Breast epithelium (tissue), 4 donors: ENCODE measurements at regions of chr1 and their contacts with region 1.

Region 1: GRCh38 chr1:184980726-184981125 is 6.4 kb upstream of the NIBAN1 start:
- DNase-seq: no peak
- H3K4me3 ChIP-seq: no peak overlapping the region
- H3K27ac ChIP-seq: no peak overlapping the region
- H3K4me1 ChIP-seq: no peaks in the 10 kb centered on the region
- H3K27me3 ChIP-seq: no peaks in the 10 kb centered on the region
- CTCF ChIP-seq: no peak
- POLR2A ChIP-seq: no peak

Region 2: DNA sequence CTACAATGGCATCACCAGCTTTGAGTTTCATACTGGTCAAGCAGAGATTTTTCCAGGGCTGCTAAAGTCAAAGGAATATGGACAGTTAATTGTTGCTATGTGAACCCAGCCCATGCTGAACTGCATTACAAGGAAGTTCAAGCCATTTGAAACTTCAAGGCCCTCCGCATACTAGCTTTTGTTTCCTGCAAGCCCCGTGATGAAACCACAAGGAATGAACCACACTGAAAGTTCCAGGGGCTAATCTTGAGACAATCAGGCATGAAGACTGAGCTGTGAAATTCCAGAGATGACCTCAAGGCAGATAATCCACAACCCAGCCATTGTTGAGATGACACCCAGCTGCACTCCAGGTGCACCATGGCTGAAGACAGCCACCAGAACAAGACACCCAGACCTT is 413.1 kb before region 1 on chr1:
- intact Hi-C with region 1: no loop called
- DNase-seq: no peak
- H3K4me3 ChIP-seq: no peak overlapping the region
- H3K27ac ChIP-seq: no peak overlapping the region
- H3K4me1 ChIP-seq: no peaks in the 10 kb centered on the region
- H3K27me3 ChIP-seq: no peaks in the 10 kb centered on the region
- CTCF ChIP-seq: no peak
- POLR2A ChIP-seq: no peak

Region 3: DNA sequence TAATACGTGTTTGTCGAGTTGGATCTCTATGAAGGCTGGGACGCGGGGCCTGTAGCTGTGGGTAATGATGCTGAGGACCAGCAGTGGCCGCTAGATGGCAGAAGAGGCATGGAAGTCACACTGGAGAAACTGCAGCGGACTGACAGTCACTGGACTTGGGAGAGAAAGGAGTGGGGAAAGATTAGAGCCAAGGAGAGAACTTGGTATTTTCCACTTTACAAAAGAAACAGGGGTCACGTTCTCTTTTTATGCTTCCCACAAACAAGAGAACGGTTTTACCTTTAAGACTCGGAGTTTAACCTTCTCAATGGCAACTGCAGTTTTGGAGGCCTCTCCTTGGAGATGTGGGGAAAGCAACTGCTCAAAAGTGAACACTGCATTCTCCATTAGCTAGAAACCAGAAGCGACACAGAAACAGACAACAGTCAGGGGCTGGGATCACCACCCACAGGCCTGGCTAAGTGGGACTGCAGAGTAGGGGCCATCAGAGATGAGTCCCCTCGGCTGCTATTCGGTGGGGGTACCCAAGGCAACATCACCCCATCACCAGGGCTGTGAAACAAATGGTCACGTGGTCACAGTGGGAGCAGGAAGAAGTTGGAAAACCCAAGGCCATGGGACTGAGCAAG is 174.9 kb before region 1 on chr1:
- intact Hi-C with region 1: loop called (anchors 1 kb)
- DNase-seq: peak; percentile 87 to 91
- H3K4me3 ChIP-seq: no peak overlapping the region
- H3K27ac ChIP-seq: peak overlapping the region in 1 of 2 donors; percentile 23
- H3K4me1 ChIP-seq: no peaks in the 10 kb centered on the region
- H3K27me3 ChIP-seq: no peaks in the 10 kb centered on the region
- CTCF ChIP-seq: peak; percentile 84 to 97 (median 94)
- POLR2A ChIP-seq: no peak

Region 4: GRCh38 chr1:184965944-184966860 is 14.5 kb before region 1 on chr1:
- intact Hi-C with region 1: no loop called
- DNase-seq: no peak
- H3K4me3 ChIP-seq: no peak overlapping the region
- H3K27ac ChIP-seq: no peak overlapping the region
- H3K4me1 ChIP-seq: no peaks in the 10 kb centered on the region
- H3K27me3 ChIP-seq: no peaks in the 10 kb centered on the region
- CTCF ChIP-seq: no peak
- POLR2A ChIP-seq: no peak